Transverse colon (tissue), 4 donors: ENCODE measurements at regions of chr1 and their contacts with region 1.

Region 1: GRCh38 chr1:32291708-32292492 is at the start of gene HDAC1:
- DNase-seq: peak; percentile 99
- H3K4me3 ChIP-seq: peak within 1 kb of the TSS; percentile 76 to 98 (median 83)
- H3K27ac ChIP-seq: peak within 1 kb of the TSS; percentile 90 to 94 (median 92)
- H3K4me1 ChIP-seq: peaks cover 0 to 50% (median 26%) of the 10 kb centered on the region in 4 donors
- H3K27me3 ChIP-seq: no peaks in the 10 kb centered on the region
- CTCF ChIP-seq: peak in 2 of 5 experiments; percentile 9 to 14
- EP300 ChIP-seq: no peak
- POLR2A ChIP-seq: peak; percentile 85
- total RNA-seq, gene HDAC1: 85.2 to 218 (median 174) TPM

Region 2: GRCh38 chr1:32005522-32005921 is 286.4 kb before region 1 on chr1:
- in situ Hi-C with region 1: no loop called
- intact Hi-C with region 1: no loop called
- DNase-seq: no peak
- H3K4me3 ChIP-seq: no peak overlapping the region
- H3K27ac ChIP-seq: no peak overlapping the region
- H3K4me1 ChIP-seq: no peaks in the 10 kb centered on the region
- H3K27me3 ChIP-seq: no peaks in the 10 kb centered on the region
- CTCF ChIP-seq: no peak
- EP300 ChIP-seq: no peak
- POLR2A ChIP-seq: no peak

Region 3: DNA sequence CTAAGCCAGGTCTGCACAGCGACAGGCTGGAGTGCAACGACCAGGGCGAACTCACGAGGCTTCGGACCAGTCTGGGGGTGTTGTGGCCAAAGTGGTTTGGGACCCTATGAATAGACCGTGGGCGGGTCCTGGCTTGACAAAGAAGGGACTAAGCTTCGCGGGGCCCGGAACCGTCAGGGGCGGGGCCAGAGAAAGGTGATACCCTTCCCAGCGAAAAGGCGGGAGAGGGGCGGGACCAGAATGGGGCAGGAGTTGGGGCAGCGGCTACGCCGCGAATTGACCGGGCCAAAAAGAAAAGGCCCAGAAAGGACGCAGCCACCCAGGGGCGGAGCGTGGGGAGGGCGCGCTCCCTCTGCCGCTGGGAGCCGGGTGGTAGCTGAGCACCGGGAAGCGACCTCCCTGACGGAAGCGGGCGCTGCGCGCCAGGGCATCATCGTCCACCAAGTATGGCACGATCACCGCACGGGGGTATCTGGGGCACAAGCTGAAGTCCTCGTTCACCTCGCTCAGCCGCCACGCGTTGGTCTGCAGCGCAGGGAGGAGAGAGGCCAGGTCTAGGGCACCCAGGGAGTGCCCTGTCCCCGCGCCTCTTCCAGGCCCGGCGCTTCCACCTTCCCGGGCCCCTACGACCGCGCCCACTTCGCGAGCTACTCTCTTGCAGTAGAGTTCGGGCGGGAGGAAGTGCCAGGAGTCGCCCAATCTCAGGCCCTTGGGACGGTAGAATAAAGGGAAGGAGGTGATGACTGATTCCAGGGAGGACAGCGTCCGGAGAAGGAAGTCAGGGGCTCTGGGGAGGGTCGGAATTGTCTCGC is 51.6 kb before region 1 on chr1:
- in situ Hi-C with region 1: no loop called
- intact Hi-C with region 1: loop called (anchors 5 kb)
- DNase-seq: peak; percentile 87
- H3K4me3 ChIP-seq: peak overlapping the region; percentile 57 to 75 (median 64)
- H3K27ac ChIP-seq: peak overlapping the region; percentile 80 to 94 (median 86)
- H3K4me1 ChIP-seq: peaks cover 4 to 26% (median 15%) of the 10 kb centered on the region in 4 donors
- H3K27me3 ChIP-seq: no peaks in the 10 kb centered on the region
- CTCF ChIP-seq: peak in 4 of 5 experiments; percentile 11 to 43 (median 17)
- EP300 ChIP-seq: no peak
- POLR2A ChIP-seq: peak; percentile 59